ENCODE measurements at regions of chr2 and their contacts with region 1.

Region 1: GRCh38 chr2:200864176-200864976 is at the start of gene CLK1:
- DNase-seq: peak; percentile 95 to 97 (median 96)
- H3K4me3 ChIP-seq: peak within 1 kb of the TSS; percentile 80 to 100 (median 99)
- H3K27ac ChIP-seq: peak within 1 kb of the TSS; percentile 99 to 100
- H3K4me1 ChIP-seq: peaks cover 16 to 50% (median 31%) of the 10 kb centered on the region in 4 experiments
- H3K27me3 ChIP-seq: no peaks in the 10 kb centered on the region

Region 2: DNA sequence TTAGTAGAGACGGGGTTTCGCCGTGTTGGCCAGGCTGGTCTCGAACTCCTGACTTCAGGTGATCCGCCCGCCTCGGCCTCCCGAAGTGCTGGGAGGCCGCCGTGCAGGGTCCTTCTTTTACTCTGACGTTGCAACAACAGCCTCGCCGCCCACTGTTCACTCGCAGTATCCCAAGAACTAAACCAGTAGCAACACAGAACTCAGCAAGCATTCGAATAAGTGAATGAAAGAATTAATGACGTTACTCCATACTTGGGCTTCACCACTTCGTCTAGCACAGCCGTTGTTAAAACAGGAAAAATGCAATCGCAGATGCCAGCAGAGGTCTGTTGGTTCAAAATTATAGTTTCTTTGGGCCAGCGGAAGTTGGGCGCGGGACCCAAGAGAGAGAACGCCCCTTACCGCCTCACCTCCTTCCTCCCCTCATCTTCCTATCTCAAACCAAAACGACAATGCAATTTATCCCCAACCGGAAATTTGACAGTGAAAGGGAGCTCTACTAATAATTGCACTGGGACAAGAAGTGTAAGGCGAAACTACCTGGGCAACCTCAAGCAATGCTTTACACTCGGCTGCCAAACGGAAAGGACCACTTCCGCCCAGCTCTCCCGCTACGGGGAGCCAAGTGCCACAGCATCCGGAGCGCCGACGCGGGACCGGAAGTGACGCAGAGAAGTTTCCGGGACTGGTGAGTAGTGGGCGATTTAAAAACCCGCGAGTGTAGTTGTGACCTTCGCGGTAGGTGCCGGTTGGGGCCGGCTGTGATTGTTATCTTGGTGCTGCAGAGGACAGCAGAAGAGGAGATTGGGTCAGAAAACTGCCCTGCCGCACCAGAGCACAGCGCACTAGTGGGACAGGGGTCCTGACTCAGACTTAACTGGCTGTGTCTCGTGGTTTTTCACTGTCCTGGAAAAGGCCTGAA is 24.6 kb after region 1 on chr2 and contains the starts of genes NIF3L1 and PPIL3:
- CTCF ChIA-PET with region 1: interaction called, 5 read pairs
- POLR2A ChIA-PET with region 1: interaction called, 19 read pairs
- DNase-seq: peak; percentile 99
- H3K4me3 ChIP-seq: peak within 1 kb of the TSS; percentile 75 to 99 (median 82)
- H3K27ac ChIP-seq: peak within 1 kb of the TSS; percentile 93 to 96
- H3K4me1 ChIP-seq: peaks cover 10 to 26% (median 20%) of the 10 kb centered on the region in 4 experiments
- H3K27me3 ChIP-seq: no peaks in the 10 kb centered on the region

Region 3: GRCh38 chr2:200939832-200940231 is 75.5 kb after region 1 on chr2:
- CTCF ChIA-PET with region 1: no interaction called
- POLR2A ChIA-PET with region 1: no interaction called
- DNase-seq: no peak
- H3K4me3 ChIP-seq: no peak overlapping the region
- H3K27ac ChIP-seq: no peak overlapping the region
- H3K4me1 ChIP-seq: no peaks in the 10 kb centered on the region
- H3K27me3 ChIP-seq: no peaks in the 10 kb centered on the region

Measured in common myeloid progenitor, CD34-positive (primary cell).